ENCODE measurements at regions of chr11 and their contacts with region 1.

Region 1: GRCh38 chr11:17132654-17133053 is 55.2 kb upstream of the RPS13 start:
- DNase-seq: no peak
- ATAC-seq: no peak
- H3K4me3 ChIP-seq: no peak overlapping the region
- H3K27ac ChIP-seq: no peak overlapping the region
- H3K4me1 ChIP-seq: peaks cover 13% of the 10 kb centered on the region
- H3K27me3 ChIP-seq: no peaks in the 10 kb centered on the region
- CTCF ChIP-seq: no peak

Region 2: GRCh38 chr11:16871368-16871767 is 261.3 kb before region 1 on chr11:
- CTCF ChIA-PET with region 1: no interaction called
- POLR2A ChIA-PET with region 1: no interaction called
- intact Hi-C with region 1: no loop called
- DNase-seq: no peak
- ATAC-seq: no peak
- H3K4me3 ChIP-seq: no peak overlapping the region
- H3K27ac ChIP-seq: no peak overlapping the region
- H3K4me1 ChIP-seq: no peaks in the 10 kb centered on the region
- H3K27me3 ChIP-seq: no peaks in the 10 kb centered on the region
- CTCF ChIP-seq: no peak

Region 3: GRCh38 chr11:17154409-17155159 is 21.9 kb after region 1 on chr11:
- CTCF ChIA-PET with region 1: no interaction called
- POLR2A ChIA-PET with region 1: interaction called, 20 read pairs
- intact Hi-C with region 1: no loop called
- DNase-seq: no peak
- ATAC-seq: no peak
- H3K4me3 ChIP-seq: no peak overlapping the region
- H3K27ac ChIP-seq: no peak overlapping the region
- H3K4me1 ChIP-seq: no peaks in the 10 kb centered on the region
- H3K27me3 ChIP-seq: no peaks in the 10 kb centered on the region
- CTCF ChIP-seq: no peak

Measured in PC-3 (cell line).